WTC11 (cell line): ENCODE measurements at regions of chr3 and their contacts with region 1.

Region 1: GRCh38 chr3:81490541-81491288 is 270.7 kb downstream of the GBE1 start:
- DNase-seq: peak; percentile 85
- ATAC-seq: peak; percentile 98
- H3K4me3 Mint-ChIP-seq: no peak overlapping the region
- H3K27ac Mint-ChIP-seq: no peak overlapping the region
- H3K4me1 Mint-ChIP-seq: no peaks in the 10 kb centered on the region
- H3K27me3 Mint-ChIP-seq: no peaks in the 10 kb centered on the region
- CTCF ChIP-seq: peak; percentile 89

Region 2: DNA sequence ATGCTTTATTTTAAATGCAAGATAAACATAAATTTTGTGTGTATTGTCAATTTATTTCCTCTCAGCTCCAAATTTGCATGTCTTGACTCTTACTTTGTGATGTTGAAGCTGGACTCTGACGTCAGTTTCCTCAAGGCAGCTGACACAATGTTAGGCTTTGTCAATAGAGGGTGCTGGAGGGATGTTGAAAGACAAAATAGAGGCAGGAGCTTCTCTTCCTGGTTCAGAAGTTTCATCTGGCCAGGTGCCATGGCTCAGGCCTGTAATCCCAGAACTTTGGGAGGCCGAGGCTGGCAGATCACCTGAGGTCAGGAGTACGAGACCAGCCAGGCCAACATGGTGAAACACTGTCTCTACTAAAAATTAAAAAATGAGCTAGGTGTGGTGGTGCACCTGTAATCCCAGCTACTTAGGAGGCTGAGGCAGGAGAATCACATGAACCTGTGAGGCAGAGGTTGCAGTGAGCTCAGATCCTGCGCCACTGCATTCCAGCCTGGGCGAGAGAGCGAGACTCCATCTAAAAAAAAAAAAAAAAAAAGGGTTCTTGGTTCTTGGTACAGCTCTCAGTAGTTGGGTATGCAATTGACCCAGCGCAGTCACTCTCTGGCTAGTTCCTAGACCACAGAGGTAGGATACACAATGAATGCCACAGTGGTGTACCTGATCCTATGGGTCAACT is 137.7 kb before region 1 on chr3:
- CTCF ChIA-PET with region 1: interaction called, 10 read pairs
- POLR2A ChIA-PET with region 1: no interaction called
- DNase-seq: no peak
- ATAC-seq: peak; percentile 90
- H3K4me3 Mint-ChIP-seq: no peak overlapping the region
- H3K27ac Mint-ChIP-seq: no peak overlapping the region
- H3K4me1 Mint-ChIP-seq: no peaks in the 10 kb centered on the region
- H3K27me3 Mint-ChIP-seq: no peaks in the 10 kb centered on the region
- CTCF ChIP-seq: no peak

Region 3: GRCh38 chr3:81476692-81477091 is 14.0 kb before region 1 on chr3:
- CTCF ChIA-PET with region 1: interaction called, 21 read pairs
- POLR2A ChIA-PET with region 1: no interaction called
- DNase-seq: no peak
- ATAC-seq: no peak
- H3K4me3 Mint-ChIP-seq: no peak overlapping the region
- H3K27ac Mint-ChIP-seq: no peak overlapping the region
- H3K4me1 Mint-ChIP-seq: peaks cover 23% of the 10 kb centered on the region
- H3K27me3 Mint-ChIP-seq: no peaks in the 10 kb centered on the region
- CTCF ChIP-seq: no peak

Region 4: DNA sequence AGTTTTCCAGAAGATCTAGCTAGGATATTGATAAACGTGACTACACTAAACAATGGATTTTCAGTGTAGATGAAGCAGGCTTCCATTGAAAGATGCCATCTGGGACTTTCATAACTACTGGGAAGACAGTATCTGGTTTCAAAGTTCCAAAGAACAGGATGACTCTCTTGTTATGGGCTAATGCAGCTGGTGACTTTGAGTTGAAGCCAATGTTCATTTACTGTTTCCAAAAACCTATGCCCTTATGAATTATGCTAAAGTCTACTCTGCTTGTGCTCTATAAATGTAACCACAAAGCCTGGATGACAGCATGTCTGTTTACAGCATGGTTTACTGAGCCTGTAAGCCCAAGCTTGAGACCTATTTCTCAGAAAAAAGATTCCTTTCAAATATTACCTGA is 25.3 kb after region 1 on chr3:
- CTCF ChIA-PET with region 1: interaction called, 13 read pairs
- POLR2A ChIA-PET with region 1: no interaction called
- DNase-seq: no peak
- ATAC-seq: no peak
- H3K4me3 Mint-ChIP-seq: no peak overlapping the region
- H3K27ac Mint-ChIP-seq: no peak overlapping the region
- H3K4me1 Mint-ChIP-seq: no peaks in the 10 kb centered on the region
- H3K27me3 Mint-ChIP-seq: no peaks in the 10 kb centered on the region
- CTCF ChIP-seq: no peak

Region 5: DNA sequence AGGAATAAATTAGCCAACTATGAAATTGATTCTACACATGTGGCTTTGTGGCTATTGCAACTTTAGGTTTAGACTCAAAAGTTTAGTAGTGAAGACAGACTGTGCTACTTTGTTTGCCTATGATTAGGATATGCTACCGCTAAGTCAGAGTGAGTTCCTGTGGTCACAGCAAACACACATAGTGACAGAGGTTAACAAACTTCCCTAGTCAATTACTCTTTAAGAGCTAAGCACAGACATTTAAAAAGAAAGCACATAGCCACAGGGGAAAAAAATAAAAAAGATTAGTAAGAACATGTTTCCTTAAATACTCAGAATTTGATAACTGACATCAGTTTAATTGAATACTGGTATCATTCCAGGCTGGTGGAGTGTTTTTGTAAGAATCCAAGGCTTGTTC is 63.7 kb after region 1 on chr3:
- CTCF ChIA-PET with region 1: no interaction called
- POLR2A ChIA-PET with region 1: no interaction called
- DNase-seq: no peak
- ATAC-seq: peak; percentile 51
- H3K4me3 Mint-ChIP-seq: no peak overlapping the region
- H3K27ac Mint-ChIP-seq: no peak overlapping the region
- H3K4me1 Mint-ChIP-seq: peaks cover 16% of the 10 kb centered on the region; the same call in 1 of the 2 replicates
- H3K27me3 Mint-ChIP-seq: no peaks in the 10 kb centered on the region
- CTCF ChIP-seq: no peak

Region 6: GRCh38 chr3:81643721-81644120 is 153.0 kb after region 1 on chr3:
- CTCF ChIA-PET with region 1: interaction called, 17 read pairs
- POLR2A ChIA-PET with region 1: no interaction called
- DNase-seq: no peak
- ATAC-seq: peak; percentile 82
- H3K4me3 Mint-ChIP-seq: no peak overlapping the region
- H3K27ac Mint-ChIP-seq: no peak overlapping the region
- H3K4me1 Mint-ChIP-seq: no peaks in the 10 kb centered on the region
- H3K27me3 Mint-ChIP-seq: no peaks in the 10 kb centered on the region
- CTCF ChIP-seq: no peak